Activated CD4-positive, alpha-beta T cell treated with anti-CD3 and anti-CD28 coated beads for 36 hours (primary cell): ENCODE measurements at regions of chr7 and their contacts with region 1.

Region 1: DNA sequence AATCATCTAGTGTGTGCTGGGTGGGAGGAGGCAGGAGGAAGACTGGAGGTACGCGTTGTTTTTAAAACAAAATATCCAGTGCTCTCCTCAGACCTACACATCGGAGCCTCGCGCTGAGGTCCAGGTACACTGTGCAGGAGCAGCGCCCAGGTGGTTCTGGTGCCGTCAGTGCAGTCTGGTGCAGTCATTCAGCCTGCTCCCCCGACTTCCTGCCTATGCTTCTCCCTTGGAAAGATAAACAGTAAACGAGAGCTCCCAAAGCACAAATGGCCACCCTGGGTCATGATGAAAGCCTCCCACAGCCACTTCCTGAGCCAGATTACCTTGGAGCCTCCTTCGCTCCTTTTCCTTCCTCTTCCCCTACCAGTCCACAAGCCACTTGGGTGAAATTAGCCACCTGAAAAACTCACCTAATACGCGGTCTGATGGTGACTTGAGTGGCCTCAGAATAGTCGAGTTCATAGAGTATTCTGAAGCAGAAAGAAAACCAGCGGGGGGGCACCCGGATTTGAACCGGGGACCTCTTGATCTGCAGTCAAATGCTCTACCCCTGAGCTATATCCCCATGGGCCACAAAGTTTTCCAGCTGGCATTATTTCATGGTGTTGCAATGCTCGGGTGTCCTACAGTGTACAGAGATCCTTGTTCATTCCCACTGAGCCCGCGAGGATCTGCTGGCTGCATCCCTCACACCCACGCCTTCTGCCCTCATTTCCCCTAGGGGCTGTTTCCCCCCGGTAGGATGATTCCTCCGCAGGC is 82.5 kb downstream of the ZNF467 start:
- DNase-seq: peak; percentile 41
- ATAC-seq: peak; percentile 26
- H3K4me3 Mint-ChIP-seq: no peak overlapping the region
- H3K27ac Mint-ChIP-seq: no peak overlapping the region
- H3K4me1 Mint-ChIP-seq: no peaks in the 10 kb centered on the region
- H3K27me3 Mint-ChIP-seq: peaks cover 50% of the 10 kb centered on the region

Region 2: GRCh38 chr7:149680331-149681025 is 10.4 kb before region 1 on chr7:
- CTCF ChIA-PET with region 1: no interaction called
- POLR2A ChIA-PET with region 1: no interaction called
- intact Hi-C with region 1: loop called in 1 of 2 experiments (anchors 1 kb)
- DNase-seq: no peak
- ATAC-seq: no peak
- H3K4me3 Mint-ChIP-seq: no peak overlapping the region
- H3K27ac Mint-ChIP-seq: no peak overlapping the region
- H3K4me1 Mint-ChIP-seq: no peaks in the 10 kb centered on the region
- H3K27me3 Mint-ChIP-seq: peaks cover 27% of the 10 kb centered on the region

Region 3: GRCh38 chr7:150586785-150587152 is 895.9 kb after region 1 on chr7:
- CTCF ChIA-PET with region 1: no interaction called
- POLR2A ChIA-PET with region 1: no interaction called
- intact Hi-C with region 1: no loop called
- DNase-seq: no peak
- ATAC-seq: peak; percentile 61
- H3K4me3 Mint-ChIP-seq: no peak overlapping the region
- H3K27ac Mint-ChIP-seq: peak overlapping the region; percentile 68
- H3K4me1 Mint-ChIP-seq: peaks cover 39% of the 10 kb centered on the region
- H3K27me3 Mint-ChIP-seq: no peaks in the 10 kb centered on the region